PC-9 (cell line): ENCODE measurements at regions of chr9 and their contacts with region 1.

Region 1: DNA sequence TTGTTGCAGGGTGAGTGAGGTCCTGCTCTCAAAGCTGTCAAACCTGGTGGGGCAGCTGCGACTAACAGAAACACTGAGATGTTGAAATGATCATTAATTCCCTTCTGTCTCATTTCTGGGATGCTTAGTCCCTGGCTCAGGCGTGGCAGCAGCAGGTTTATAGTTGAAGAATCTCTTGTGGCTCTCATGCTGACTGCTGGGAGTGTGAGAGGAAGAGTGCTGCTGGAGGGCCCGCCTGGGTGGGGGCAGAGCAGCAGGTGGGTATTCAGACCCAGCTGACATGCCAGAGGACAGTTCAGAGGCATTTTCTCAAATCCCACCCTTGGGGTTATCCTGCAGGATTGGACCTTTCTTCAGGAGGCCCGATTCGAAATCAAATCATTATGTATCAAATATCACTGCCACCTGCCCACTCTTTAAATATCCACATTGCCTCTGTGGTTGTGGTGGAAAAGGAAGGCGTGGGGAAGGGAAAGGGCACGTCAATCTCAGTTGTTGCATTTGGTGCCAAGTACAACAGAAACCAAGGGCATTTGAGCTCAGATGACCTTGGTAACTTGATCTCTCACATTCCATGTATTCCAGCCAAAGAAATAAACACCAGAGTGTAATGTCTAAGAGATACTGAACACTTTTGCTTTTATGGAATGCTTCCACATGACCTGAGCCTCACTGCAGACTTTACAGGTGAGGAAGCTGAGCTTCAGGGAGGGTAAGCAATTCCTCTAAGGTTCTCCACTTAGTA is 224.3 kb downstream of the AOPEP start:
- DNase-seq: peak; percentile 89 to 100
- H3K4me3 ChIP-seq: peak overlapping the region; percentile 5; the same call in 1 of the 2 replicates
- H3K27ac ChIP-seq: peak overlapping the region; percentile 91
- H3K4me1 ChIP-seq: peaks cover 85% of the 10 kb centered on the region
- H3K27me3 ChIP-seq: no peaks in the 10 kb centered on the region
- CTCF ChIP-seq: no peak

Region 2: GRCh38 chr9:94812343-94812742 is 138.4 kb before region 1 on chr9:
- CTCF ChIA-PET with region 1: no interaction called
- POLR2A ChIA-PET with region 1: interaction called, 6 read pairs
- intact Hi-C with region 1: loop called (anchors 2 kb)
- DNase-seq: peak; percentile 75 to 91
- H3K4me3 ChIP-seq: no peak overlapping the region
- H3K27ac ChIP-seq: peak overlapping the region; percentile 67
- H3K4me1 ChIP-seq: peaks cover 80% of the 10 kb centered on the region
- H3K27me3 ChIP-seq: no peaks in the 10 kb centered on the region
- CTCF ChIP-seq: no peak

Region 3: DNA sequence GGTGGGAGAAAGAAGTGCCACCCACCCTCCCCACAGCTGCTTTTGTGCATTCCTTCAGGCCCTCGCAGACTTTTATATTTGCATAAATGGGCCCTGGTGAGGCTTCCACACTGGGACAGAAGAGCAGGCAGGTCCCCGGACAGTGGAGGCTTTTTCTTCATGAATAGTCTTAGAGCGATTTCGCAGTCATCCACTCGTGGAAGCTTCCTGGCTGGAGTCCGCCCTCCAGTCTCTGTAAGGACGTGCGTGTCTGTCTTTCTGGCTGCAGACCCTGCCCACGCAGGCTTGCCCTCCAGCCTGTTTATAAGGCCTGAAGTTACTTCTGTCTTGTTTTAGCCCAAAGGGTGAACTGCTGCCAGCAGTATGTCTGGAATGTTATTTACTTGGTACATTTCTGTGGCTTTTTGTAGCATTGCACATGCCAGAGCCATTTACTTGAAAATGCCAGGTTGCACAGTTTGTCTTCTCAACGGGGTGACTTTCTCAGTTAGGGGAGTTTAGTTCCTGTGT is 28.6 kb before region 1 on chr9:
- CTCF ChIA-PET with region 1: no interaction called
- POLR2A ChIA-PET with region 1: interaction called, 12 read pairs
- intact Hi-C with region 1: loop called (anchors 1 kb)
- DNase-seq: peak; percentile 79 to 99
- H3K4me3 ChIP-seq: peak overlapping the region; percentile 46
- H3K27ac ChIP-seq: peak overlapping the region; percentile 97
- H3K4me1 ChIP-seq: peaks cover 92% of the 10 kb centered on the region
- H3K27me3 ChIP-seq: no peaks in the 10 kb centered on the region
- CTCF ChIP-seq: no peak

Region 4: GRCh38 chr9:95004411-95005277 is 53.9 kb after region 1 on chr9:
- CTCF ChIA-PET with region 1: no interaction called
- POLR2A ChIA-PET with region 1: interaction called, 5 read pairs
- intact Hi-C with region 1: loop called (anchors 1 kb)
- DNase-seq: peak in 1 of 2 experiments; percentile 65
- H3K4me3 ChIP-seq: peak overlapping the region; percentile 91
- H3K27ac ChIP-seq: peak overlapping the region; percentile 90
- H3K4me1 ChIP-seq: peaks cover 46% of the 10 kb centered on the region
- H3K27me3 ChIP-seq: no peaks in the 10 kb centered on the region
- CTCF ChIP-seq: no peak

Region 5: GRCh38 chr9:95092262-95093072 is 141.7 kb after region 1 on chr9:
- CTCF ChIA-PET with region 1: no interaction called
- POLR2A ChIA-PET with region 1: interaction called, 5 read pairs
- intact Hi-C with region 1: loop called (anchors 1 kb)
- DNase-seq: peak; percentile 87 to 96
- H3K4me3 ChIP-seq: no peak overlapping the region
- H3K27ac ChIP-seq: peak overlapping the region; percentile 88
- H3K4me1 ChIP-seq: peaks cover 47% of the 10 kb centered on the region
- H3K27me3 ChIP-seq: no peaks in the 10 kb centered on the region
- CTCF ChIP-seq: no peak